Activated T-helper 1 cell treated with anti-CD3 and anti-CD28 coated beads, Interleukin-12 subunit alpha, Interleukin-12 subunit beta, Interleukin-2, Interleukin-4 antibody, amounts not matched to agents 30 ng/mL and 10 ng/mL and 1 ng/mL, durations not matched to agents 14 hours and 24 hours and 36 hours (primary cell): ENCODE measurements at regions of chr1 and their contacts with region 1.

Region 1: DNA sequence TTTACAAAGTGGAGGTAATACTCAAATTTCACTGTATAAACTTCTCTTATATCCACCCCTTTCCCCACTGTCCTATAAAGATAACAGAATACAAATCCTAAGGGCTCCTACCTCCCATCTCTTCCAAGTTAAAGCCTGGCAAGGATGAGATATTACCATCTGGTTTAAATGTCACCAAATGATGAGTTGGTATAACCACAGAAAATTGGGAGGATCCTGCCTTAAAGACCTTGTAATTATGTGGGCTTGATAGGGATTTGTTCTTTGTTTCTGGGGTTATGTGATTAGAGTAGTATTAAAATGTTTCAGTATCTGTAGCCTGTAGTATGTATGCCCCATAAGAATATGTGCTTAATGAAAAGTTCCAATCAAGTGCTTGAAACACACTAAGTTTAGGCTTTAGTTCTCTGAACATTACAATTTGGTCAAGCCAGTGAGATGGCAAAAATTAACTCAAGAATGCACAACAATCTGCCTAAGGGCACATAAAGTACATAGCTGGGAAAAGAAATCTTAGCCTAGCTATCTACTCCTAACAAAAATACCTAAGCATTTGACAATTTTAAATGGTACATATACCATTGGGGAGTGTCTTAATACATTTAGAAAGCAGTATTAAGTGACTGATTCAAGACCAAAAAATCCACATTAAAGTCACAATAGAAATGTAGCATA is 14.0 kb downstream of the KDM5B start:
- DNase-seq: no peak
- H3K4me3 Mint-ChIP-seq: no peak overlapping the region
- H3K27ac Mint-ChIP-seq: no peak overlapping the region
- H3K4me1 Mint-ChIP-seq: peaks cover 36% of the 10 kb centered on the region
- H3K27me3 Mint-ChIP-seq: no peaks in the 10 kb centered on the region

Region 2: GRCh38 chr1:202821452-202821851 is 27.3 kb after region 1 on chr1:
- intact Hi-C with region 1: no loop called
- DNase-seq: no peak
- H3K4me3 Mint-ChIP-seq: no peak overlapping the region
- H3K27ac Mint-ChIP-seq: no peak overlapping the region
- H3K4me1 Mint-ChIP-seq: no peaks in the 10 kb centered on the region
- H3K27me3 Mint-ChIP-seq: peaks cover 31% of the 10 kb centered on the region

Region 3: GRCh38 chr1:202861420-202862200 is 67.4 kb after region 1 on chr1:
- intact Hi-C with region 1: loop called (anchors 5 kb)
- DNase-seq: peak; percentile 60
- H3K4me3 Mint-ChIP-seq: peak overlapping the region; percentile 87
- H3K27ac Mint-ChIP-seq: no peak overlapping the region
- H3K4me1 Mint-ChIP-seq: peaks cover 21% of the 10 kb centered on the region
- H3K27me3 Mint-ChIP-seq: peaks cover 65% of the 10 kb centered on the region